ENCODE measurements at regions of chr4 and their contacts with region 1.

Region 1: GRCh38 chr4:68368691-68369480 is 19.0 kb upstream of the YTHDC1 start:
- DNase-seq: peak; percentile 32 to 88
- H3K4me3 ChIP-seq: peak overlapping the region; percentile 28; the same call in 1 of the 2 replicates
- H3K27ac ChIP-seq: peak overlapping the region; percentile 95
- H3K4me1 ChIP-seq: peaks cover 36% of the 10 kb centered on the region
- H3K27me3 ChIP-seq: no peaks in the 10 kb centered on the region
- CTCF ChIP-seq: no peak

Region 2: DNA sequence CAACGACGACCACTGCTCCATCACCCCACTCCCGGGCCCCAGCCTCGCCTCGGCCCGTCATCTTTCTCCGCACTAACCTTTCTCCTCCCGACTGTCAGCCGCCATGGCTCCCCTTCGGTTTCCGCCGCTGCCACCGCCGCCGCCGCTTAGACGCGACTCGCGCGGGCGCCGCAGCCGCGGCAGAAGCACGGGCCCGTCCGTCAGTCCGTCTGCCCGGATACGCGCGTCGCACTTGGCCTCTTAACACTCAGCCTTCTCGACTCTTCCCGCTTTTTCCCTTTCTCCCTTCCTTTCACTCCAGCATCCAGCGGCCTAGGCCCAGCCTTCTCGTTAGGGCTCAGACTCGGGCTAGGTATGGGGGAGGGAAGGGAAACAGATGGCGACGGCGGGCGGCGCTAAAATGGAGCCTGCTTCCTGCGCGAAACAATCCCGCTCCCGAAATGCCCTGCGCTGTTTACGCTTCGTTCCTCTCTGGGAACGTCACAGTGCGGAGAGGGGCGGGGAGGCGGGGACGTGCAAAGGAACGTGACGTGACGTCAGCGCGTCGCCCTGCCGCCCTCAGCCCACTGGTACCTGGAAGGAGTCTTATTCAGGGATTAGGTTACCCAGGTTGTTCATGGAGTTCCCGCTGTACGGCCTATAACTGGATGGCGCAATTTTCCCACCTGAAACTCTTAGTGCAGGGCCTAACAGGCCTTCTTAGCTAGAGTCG is 19.1 kb before region 1 on chr4 and contains the start of gene YTHDC1:
- CTCF ChIA-PET with region 1: no interaction called
- POLR2A ChIA-PET with region 1: no interaction called
- intact Hi-C with region 1: loop called (anchors 1 kb)
- DNase-seq: peak; percentile 87 to 88
- H3K4me3 ChIP-seq: peak within 1 kb of the TSS; percentile 86
- H3K27ac ChIP-seq: peak within 1 kb of the TSS; percentile 89
- H3K4me1 ChIP-seq: peaks cover 23% of the 10 kb centered on the region
- H3K27me3 ChIP-seq: no peaks in the 10 kb centered on the region
- CTCF ChIP-seq: no peak
- total RNA-seq, gene YTHDC1: 64.1 and 83.6 TPM in 2 replicates

Region 3: DNA sequence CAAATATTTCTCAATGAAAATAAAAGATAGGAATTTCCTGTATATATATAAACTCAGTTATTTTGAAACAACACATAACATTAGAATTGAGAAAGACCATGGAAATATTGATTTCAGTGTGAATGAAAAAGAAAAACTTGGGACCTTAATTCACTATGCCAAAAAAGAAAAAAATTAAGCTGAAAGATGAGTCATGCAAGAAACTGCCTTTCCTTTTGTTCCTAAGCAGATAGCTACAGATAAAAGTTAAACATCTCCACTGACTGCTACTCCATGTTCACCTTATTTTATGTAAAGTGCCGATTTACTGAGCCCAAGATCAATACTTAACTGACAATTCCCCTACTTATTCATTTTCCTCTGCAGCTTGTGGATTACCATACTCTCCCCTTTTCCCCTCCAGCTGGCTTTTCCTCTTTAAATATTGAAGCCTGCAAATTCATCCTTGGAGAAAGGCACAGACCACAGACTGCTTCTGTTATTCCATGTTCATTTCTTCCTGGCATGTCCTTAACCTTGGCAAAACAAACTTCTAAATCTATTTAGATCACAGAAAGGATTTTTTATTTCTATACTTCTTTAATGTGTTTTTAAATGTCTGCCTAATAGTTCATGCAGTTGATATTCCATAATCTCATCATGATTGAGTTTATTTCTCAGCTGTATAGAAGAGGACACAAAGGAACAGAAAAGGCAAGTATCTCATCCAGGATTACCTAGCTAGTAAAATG is 21.5 kb after region 1 on chr4:
- CTCF ChIA-PET with region 1: no interaction called
- POLR2A ChIA-PET with region 1: interaction called, 10 read pairs
- intact Hi-C with region 1: no loop called
- DNase-seq: no peak
- H3K4me3 ChIP-seq: no peak overlapping the region
- H3K27ac ChIP-seq: no peak overlapping the region
- H3K4me1 ChIP-seq: no peaks in the 10 kb centered on the region
- H3K27me3 ChIP-seq: no peaks in the 10 kb centered on the region
- CTCF ChIP-seq: no peak

Region 4: DNA sequence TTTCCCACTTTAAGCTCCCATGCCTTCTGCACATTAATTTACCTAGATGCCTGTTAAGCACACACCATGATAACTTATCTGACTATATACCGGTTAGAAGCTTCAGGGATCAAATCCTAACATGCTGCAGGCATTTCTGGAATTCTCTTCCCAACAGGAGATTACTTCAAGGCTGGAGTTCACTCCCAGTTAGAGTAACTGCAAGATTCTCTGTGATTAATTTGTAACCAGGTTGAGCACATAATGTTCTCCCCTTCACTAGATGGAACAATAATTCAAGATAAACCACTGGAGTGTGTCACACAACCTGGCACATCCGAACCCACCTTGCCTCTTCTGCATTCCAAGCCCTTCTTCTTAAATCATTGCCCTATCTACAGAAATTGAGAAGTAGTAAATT is 594.5 kb after region 1 on chr4:
- CTCF ChIA-PET with region 1: no interaction called
- POLR2A ChIA-PET with region 1: no interaction called
- intact Hi-C with region 1: no loop called
- DNase-seq: no peak
- H3K4me3 ChIP-seq: no peak overlapping the region
- H3K27ac ChIP-seq: no peak overlapping the region
- H3K4me1 ChIP-seq: no peaks in the 10 kb centered on the region
- H3K27me3 ChIP-seq: no peaks in the 10 kb centered on the region
- CTCF ChIP-seq: no peak

Measured in PC-9 (cell line).